Stomach (tissue), 19 donors: ENCODE measurements at regions of chr18 and their contacts with region 1.

Region 1: GRCh38 chr18:49510393-49511115 is 23.5 kb upstream of the C18orf32 start:
- DNase-seq: peak; percentile 38 to 79
- H3K4me3 ChIP-seq: no peak overlapping the region
- H3K27ac ChIP-seq: no peak overlapping the region
- H3K4me1 ChIP-seq: no peaks in the 10 kb centered on the region
- H3K27me3 ChIP-seq: peaks cover 0 to 4% (median 0%) of the 10 kb centered on the region in 3 donors
- CTCF ChIP-seq: peak in 5 of 7 experiments; percentile 38 to 79 (median 62)
- EP300 ChIP-seq: no peak
- POLR2A ChIP-seq: no peak

Region 2: DNA sequence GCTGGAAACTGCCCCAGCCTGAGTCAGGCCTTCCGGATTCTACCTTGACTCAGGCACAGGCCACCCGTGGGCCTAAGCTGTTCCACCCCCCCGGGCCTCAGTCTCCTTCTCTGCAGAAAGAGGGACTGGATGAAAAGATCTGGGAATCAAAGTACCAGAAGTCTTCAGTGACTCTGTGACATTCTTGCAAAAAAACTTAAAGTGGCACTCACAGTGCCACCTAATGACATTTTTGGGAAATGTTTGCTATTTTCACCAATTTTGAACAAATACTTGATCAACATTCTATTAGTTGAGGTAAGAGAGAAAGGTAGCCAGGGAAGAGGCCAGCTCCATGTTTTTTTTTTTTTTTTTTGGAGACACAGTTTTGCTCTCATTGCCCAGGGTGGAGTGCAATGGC is 351.1 kb after region 1 on chr18:
- intact Hi-C with region 1: loop called (anchors 5 kb)
- DNase-seq: peak in 1 of 2 donors; percentile 26
- H3K4me3 ChIP-seq: no peak overlapping the region
- H3K27ac ChIP-seq: peak overlapping the region in 2 of 5 donors; percentile 87 to 89
- H3K4me1 ChIP-seq: peaks cover 0 to 23% (median 21%) of the 10 kb centered on the region in 4 donors
- H3K27me3 ChIP-seq: no peaks in the 10 kb centered on the region
- CTCF ChIP-seq: no peak
- EP300 ChIP-seq: no peak
- POLR2A ChIP-seq: no peak

Region 3: GRCh38 chr18:50194631-50195532 is 684.3 kb after region 1 on chr18 and contains the start of gene MYO5B:
- intact Hi-C with region 1: loop called (anchors 10 kb)
- DNase-seq: peak; percentile 91 to 95
- H3K4me3 ChIP-seq: peak within 1 kb of the TSS; percentile 60 to 69 (median 62)
- H3K27ac ChIP-seq: peak within 1 kb of the TSS; percentile 78 to 89 (median 81)
- H3K4me1 ChIP-seq: peaks cover 13 to 29% (median 26%) of the 10 kb centered on the region in 4 donors
- H3K27me3 ChIP-seq: peaks cover 0 to 79% (median 20%) of the 10 kb centered on the region in 3 donors
- CTCF ChIP-seq: peak in 3 of 7 experiments; percentile 8 to 83 (median 33)
- EP300 ChIP-seq: no peak
- POLR2A ChIP-seq: no peak
- total RNA-seq, gene MYO5B: 18.7 to 224 (median 54.5) TPM